Activated CD8-positive, alpha-beta T cell treated with anti-CD3 and anti-CD28 coated beads, Interleukin-2, amount 10 ng/mL, durations not matched to agents 7 days and 5 days (primary cell): ENCODE measurements at regions of chr17 and their contacts with region 1.

Region 1: DNA sequence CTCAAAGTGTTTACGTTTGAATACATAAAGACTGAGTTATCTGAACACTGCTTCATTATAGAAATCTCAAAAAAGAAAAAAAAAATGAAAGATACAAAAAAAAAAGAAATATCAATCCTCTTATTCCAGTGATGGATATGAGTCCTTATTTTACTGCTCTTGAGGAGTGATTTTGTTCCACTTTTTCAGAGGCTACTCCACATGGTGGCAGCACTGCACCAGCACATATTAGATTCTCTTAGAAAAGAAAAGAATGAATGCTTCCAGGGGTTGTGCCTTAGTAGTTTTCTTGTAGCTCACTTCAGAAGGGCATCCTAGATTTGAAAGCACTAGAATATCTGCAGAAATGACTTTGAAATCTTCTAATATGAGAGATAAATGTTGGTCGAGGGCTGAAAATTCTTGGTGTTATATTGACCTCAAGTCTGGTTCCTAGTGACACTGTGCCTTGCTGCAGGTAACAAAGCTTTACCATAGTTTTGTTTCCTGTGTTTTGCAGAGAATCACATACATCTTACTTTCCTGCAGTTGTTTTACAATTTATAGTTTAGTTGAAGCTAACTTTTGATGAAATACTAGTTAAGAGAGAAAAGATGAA is 25.9 kb downstream of the AP2B1 start:
- DNase-seq: peak; percentile 58
- ATAC-seq: no peak
- H3K4me3 Mint-ChIP-seq: no peak overlapping the region
- H3K27ac Mint-ChIP-seq: no peak overlapping the region
- H3K4me1 Mint-ChIP-seq: peaks cover 1% of the 10 kb centered on the region
- H3K27me3 Mint-ChIP-seq: no peaks in the 10 kb centered on the region

Region 2: GRCh38 chr17:35578197-35578928 is 34.7 kb before region 1 on chr17 and contains the start of gene PEX12:
- CTCF ChIA-PET with region 1: interaction called, 12 read pairs
- POLR2A ChIA-PET with region 1: interaction called, 3 read pairs
- DNase-seq: peak; percentile 94
- ATAC-seq: peak; percentile 96
- H3K4me3 Mint-ChIP-seq: peak within 1 kb of the TSS; percentile 93
- H3K27ac Mint-ChIP-seq: peak within 1 kb of the TSS; percentile 96
- H3K4me1 Mint-ChIP-seq: peaks cover 28% of the 10 kb centered on the region
- H3K27me3 Mint-ChIP-seq: peaks cover under 1% of the 10 kb centered on the region
- total RNA-seq, gene PEX12: 4.0 to 4.1 TPM

Region 3: DNA sequence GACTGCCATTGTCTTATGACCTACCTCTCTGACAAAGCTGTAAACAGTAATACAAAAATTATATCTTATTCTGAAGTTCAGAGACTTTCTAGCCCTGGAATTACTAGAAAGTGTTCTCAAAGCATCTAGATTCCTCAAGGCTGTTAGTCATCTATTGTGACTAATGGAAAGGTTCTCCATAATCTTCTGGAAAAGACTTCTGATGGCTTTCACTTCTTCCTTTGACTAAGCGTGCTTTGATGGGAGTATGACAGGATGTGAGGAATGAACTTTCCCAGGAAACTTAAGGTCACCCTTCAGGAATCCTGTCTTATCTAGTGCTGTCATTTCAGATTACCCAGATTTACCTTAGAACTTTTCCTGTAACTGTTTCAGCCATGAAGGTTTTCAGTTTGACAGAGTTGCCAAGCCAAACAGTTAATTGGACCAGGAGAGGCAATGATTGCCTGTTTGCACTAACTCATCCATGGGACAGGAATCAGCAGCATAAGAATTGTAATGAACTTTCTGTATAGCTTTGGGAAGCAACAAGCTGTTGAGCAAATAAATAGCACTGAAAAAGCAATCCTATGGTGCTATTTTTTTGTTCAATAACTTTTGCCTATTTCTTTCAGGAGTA is 17.6 kb after region 1 on chr17:
- CTCF ChIA-PET with region 1: interaction called, 14 read pairs
- POLR2A ChIA-PET with region 1: no interaction called
- DNase-seq: no peak
- ATAC-seq: no peak
- H3K4me3 Mint-ChIP-seq: no peak overlapping the region
- H3K27ac Mint-ChIP-seq: no peak overlapping the region
- H3K4me1 Mint-ChIP-seq: no peaks in the 10 kb centered on the region
- H3K27me3 Mint-ChIP-seq: no peaks in the 10 kb centered on the region

Region 4: DNA sequence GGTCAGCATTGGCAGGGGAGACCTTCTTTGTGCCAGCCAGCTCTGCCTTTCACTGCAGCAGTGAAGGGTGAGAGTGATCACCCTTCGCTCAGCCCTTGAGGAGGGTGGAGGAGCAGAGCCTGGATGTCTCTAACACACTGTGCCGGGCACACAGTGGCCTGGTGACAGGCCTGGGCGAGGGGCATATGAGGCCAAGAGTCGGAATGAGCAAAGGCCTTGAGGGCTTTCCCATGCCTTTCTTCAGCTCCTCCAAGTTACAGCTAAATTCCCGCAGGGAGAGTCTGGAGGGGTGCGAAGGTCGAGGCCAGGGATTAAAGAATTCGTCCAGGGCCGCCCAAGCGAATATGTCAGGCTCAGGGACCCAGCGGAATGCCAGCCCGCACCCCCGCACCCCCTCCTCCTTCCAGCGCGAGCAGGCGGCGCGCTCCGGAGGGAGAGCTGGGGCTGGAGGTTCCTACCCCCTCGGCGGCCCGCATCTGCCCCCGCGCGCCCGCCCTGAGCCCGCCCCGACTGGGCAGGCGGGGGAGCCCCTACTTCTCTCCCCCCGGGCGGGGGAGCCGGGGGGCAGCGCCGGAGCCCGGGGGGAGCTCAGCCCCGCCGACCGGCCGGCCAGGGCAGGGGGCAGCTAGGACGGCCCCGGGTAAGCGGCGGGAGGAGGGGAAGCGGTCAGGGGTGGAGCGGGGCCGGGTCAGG is 118.4 kb after region 1 on chr17 and contains the start of gene RASL10B:
- CTCF ChIA-PET with region 1: interaction called, 15 read pairs
- POLR2A ChIA-PET with region 1: no interaction called
- DNase-seq: no peak
- ATAC-seq: peak; percentile 59
- H3K4me3 Mint-ChIP-seq: peak within 1 kb of the TSS; percentile 38
- H3K27ac Mint-ChIP-seq: no peak within 1 kb of the TSS
- H3K4me1 Mint-ChIP-seq: peaks cover 13% of the 10 kb centered on the region
- H3K27me3 Mint-ChIP-seq: peaks cover 20% of the 10 kb centered on the region
- total RNA-seq, gene RASL10B: 0.10 TPM in 1 of 2 experiments, not detected in the other

Region 5: GRCh38 chr17:35808962-35809854 is 196.2 kb after region 1 on chr17 and contains the start of gene TAF15:
- CTCF ChIA-PET with region 1: interaction called, 23 read pairs
- POLR2A ChIA-PET with region 1: interaction called, 3 read pairs
- DNase-seq: peak; percentile 98
- ATAC-seq: peak; percentile 94
- H3K4me3 Mint-ChIP-seq: peak within 1 kb of the TSS; percentile 85
- H3K27ac Mint-ChIP-seq: peak within 1 kb of the TSS; percentile 98
- H3K4me1 Mint-ChIP-seq: peaks cover 54% of the 10 kb centered on the region
- H3K27me3 Mint-ChIP-seq: no peaks in the 10 kb centered on the region
- total RNA-seq, gene TAF15: 336 to 341 TPM